Posterior cingulate gyrus (tissue), 11 donors: ENCODE measurements at regions of chr22 and their contacts with region 1.

Region 1: DNA sequence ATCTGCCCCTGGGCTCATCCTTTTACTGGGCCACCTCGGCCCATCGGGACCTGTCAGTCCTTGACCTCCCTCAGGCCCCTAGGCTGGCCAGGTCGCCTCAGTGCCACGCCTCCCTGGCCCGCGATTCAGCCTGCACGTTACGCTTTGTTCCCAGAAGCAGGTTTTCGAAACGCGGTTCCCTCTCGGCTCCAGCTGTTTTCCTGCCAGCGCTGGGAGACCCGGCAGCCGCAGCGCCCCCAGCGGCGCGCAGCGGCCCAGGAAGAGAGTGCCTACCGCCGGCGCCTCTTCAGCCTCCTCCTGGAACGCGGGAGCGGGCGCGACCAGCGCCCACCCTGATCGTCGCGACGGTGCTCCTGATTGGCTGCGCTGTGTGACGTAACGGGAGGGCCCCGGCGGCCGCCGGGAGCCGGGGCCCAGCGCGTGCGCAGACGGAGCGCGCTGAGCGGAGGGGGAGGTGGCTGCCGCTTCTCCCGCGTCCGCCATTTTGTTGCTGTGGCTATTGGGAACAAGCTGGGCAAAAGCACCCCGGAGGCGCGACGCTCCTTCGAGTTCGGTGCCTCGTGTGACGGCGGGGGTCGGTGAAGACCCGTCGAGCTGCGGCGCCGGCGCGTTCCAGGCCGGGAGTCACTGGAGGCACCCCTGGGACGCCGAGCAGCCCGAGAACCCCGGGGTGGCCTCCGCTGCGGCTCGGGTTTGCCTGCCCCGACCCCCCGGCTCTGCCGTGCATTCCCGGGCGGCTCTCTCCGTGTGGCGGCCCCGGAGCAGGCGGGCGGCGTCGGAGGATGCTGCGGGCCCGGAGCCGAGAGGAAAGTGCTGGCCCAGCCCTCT is at the start of gene CRKL:
- DNase-seq: peak; percentile 94 to 100 (median 96)

Region 2: GRCh38 chr22:20803696-20804324 is 113.4 kb before region 1 on chr22:
- intact Hi-C with region 1: no loop called
- DNase-seq: peak in 9 of 10 donors; percentile 26 to 95 (median 68)

Region 3: DNA sequence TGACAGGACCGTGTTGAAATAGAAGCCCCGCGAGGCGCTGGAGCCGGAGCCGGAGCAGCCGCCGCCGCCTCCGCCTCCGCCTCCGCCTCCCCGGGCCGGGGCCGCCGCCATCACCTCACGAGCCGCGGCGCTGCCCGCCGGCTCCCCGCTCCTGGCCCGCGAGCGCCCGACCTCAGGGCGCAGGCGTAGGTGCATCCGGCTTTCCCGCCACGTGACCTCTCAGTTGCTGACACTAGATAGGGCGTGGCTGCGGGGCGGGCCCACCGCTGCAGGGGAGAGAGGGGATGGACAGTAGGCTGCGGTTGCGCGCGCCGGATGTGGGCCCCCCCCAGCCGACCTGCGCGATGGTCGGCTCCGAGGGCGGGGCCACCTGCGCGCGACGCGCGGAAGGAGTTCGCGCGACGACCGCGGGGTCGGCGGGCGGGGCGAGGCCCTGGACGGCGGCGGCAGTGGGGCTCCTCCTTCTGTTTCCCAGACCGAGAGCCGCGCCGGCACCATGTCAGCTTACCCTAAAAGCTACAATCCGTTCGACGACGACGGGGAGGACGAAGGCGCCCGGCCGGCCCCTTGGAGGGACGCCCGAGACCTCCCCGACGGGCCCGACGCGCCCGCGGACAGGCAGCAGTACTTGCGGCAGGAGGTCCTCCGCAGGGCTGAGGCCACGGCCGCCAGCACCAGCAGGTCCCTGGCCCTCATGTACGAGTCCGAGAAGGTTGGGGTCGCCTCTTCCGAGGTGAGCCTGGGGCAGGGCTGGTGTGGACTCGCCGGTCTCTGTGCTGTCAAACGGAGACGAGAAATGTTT is 58.4 kb before region 1 on chr22 and contains the starts of genes PI4KA and SNAP29:
- intact Hi-C with region 1: loop called (anchors 1 kb)
- DNase-seq: peak; percentile 97 to 100 (median 98)

Region 4: DNA sequence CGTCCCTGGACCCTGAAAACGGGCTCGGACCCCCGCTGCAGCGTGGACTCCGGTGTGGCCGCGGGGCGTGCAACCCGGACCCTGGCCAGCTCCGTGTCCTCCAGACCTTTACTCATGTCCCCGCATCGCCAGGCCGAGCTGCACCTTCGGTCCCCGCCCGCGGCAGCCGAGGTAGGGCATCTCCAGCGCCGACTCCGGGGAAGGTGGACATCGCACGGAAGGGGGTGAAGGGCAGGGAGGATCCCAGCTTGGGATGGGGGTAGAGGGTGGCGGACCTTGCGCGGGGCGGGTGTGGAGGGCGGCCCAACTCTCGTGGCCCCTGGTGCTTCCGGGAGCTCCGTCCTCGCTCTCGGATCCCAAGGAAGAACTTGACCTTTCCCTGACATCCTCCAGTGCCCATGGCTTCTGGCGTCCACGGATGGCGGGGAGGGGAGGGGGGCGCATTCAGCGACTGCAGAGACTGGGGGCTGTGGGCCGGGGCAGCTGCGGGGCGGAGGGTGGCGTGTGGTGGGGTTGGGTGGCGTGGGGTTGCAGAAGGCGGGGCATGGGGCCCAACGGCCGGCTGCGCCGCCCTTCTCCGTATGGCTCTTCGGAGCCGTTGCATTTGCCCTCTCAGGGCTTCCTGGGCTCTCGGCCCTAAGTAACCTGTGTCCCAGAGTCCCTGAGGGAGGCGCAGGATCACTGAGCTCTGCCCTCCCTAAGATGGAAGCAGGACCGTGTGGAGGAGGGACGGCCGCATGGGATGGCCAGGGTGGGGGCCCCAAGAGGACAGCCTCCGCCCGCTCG is 40.3 kb after region 1 on chr22:
- intact Hi-C with region 1: loop called (anchors 5 kb)
- DNase-seq: peak in 2 of 10 donors; percentile 84 to 85

Region 5: DNA sequence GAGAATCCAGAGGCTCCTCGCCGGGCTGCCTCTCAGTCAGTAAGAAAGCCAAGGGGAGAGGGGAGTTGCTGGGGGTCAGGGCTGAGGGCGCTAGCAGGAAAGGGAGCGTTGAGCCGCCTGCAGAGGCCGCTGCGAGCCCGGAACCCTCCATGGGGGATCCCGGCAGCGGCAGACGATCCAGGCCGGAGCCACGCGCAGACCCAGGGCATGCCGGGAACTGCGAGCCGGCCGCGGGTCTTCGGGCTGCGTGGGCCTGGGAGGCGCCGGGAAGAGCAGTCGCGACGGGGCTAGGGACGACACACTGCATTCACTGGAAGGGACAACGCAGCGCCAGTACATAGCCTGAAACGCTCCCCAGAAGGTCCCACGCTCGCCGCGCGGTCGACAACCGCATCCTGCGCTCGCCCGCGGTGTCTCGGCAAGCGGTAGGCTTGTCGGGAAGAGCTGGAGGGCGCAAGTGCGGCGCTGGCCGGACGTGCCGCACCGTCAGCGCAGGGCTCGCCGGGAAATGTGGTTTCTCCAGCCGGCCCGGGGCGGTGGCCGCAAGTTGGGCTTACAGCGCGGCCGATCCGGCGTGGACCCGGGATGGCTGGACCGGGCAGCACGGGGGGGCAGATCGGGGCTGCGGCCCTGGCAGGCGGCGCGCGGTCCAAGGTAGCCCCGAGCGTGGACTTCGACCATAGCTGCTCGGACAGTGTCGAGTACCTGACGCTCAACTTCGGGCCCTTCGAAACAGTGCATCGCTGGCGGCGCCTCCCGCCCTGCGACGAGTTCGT is 64.8 kb after region 1 on chr22 and contains the start of gene LZTR1:
- intact Hi-C with region 1: loop called (anchors 1 kb)
- DNase-seq: peak; percentile 81 to 98 (median 86)